Cardiac septum (tissue), 1 donor: ENCODE measurements at regions of chr1 and their contacts with region 1.

Region 1: GRCh38 chr1:150149271-150150132 is at the start of gene PLEKHO1:
- DNase-seq: peak; percentile 97
- total RNA-seq, gene PLEKHO1: 88.8 TPM

Region 2: DNA sequence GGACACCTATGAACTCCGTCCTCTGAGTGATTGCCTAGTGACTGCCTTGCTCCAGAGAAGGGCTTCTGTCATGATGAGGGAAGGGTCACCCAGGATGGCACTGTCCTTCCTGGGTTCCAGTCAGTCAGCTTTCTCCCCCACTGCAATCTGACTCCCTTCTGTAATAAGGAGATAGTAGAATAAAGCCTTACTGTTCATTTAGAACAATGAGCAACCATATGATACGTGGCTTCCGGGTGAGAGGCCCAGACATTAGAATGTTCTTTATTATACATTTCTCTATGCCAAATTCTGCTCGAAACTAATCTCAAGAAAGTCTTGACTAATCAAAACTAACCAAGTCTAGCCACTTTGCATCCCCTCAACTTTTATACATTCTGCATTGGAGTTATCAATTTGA is 204.3 kb before region 1 on chr1:
- intact Hi-C with region 1: no loop called
- DNase-seq: no peak

Region 3: GRCh38 chr1:150010393-150011115 is 138.9 kb before region 1 on chr1 and contains the start of gene OTUD7B:
- intact Hi-C with region 1: loop called (anchors 5 kb)
- DNase-seq: peak; percentile 92
- total RNA-seq, gene OTUD7B: 32.6 TPM

Region 4: DNA sequence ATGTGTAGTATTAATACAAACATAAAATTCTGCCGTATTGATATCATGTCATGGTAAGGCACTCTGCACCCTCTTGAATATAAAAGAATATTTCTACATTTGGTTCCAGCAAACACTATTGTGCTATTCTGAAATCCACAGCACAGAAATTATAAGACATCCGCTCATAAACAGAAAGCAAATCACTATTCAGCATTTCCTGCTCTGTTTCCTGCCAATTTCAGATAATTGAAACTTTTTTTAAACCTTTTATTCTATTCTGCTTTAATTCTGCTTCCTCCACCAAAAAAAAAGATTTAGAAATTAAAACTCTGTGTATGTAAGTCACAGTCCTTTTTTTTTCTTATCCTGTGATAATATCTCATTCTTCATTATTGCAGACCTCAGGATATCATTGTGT is 39.4 kb before region 1 on chr1:
- intact Hi-C with region 1: loop called (anchors 2 kb)
- DNase-seq: no peak

Region 5: DNA sequence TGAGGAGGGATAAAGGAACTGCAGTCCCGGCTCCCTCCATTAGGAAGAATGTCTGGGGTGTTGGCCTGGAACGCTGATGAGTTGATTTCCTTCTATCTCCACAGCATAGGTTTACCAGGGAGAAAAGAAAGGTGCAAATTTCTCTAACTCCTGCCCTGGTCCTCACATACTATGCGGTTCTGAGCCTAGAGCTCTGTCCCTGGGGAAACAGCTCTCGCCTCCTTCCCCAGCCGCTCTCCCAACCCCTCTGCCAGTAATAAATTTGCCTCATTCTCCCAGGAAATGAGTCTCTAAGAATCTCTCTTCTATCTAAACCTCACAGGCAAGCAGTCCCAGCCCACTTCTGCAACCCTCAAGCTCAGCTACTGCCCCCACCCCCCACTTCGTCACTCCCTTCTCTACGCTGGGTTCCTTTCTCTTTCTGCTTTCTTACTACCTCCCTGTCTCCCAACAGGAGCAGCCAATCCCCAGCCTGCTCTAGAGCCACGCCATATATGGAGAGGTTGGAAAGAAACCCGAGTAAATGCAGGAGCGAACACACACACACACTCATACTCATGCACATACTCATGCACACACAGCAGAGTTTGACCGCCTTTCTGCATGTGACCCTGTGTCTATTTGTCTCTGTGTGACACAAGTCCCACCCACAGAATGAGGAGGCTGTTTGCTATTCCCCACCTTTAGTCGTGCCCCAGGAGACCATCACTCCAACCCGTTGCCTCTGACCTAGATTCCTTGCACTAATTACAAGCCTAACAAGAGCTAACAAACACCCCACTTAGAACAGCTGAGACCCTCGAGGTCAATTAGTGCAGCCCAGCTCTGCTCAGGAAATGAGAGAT is 13.6 kb after region 1 on chr1:
- intact Hi-C with region 1: loop called (anchors 1 kb)
- DNase-seq: peak; percentile 90